ENCODE measurements at regions of chr4 and their contacts with region 1.

Region 1: GRCh38 chr4:83639849-83640493 is 104.1 kb downstream of the GPAT3 start:
- DNase-seq: peak in 3 of 5 donors; percentile 23 to 71 (median 44)
- H3K4me3 ChIP-seq: no peak overlapping the region
- H3K27ac ChIP-seq: no peak overlapping the region
- H3K4me1 ChIP-seq: peaks cover 3% of the 10 kb centered on the region
- H3K27me3 ChIP-seq: no peaks in the 10 kb centered on the region
- CTCF ChIP-seq: peak; percentile 49 to 81 (median 78)
- EP300 ChIP-seq: no peak
- POLR2A ChIP-seq: no peak

Region 2: GRCh38 chr4:83503974-83504373 is 136.0 kb before region 1 on chr4:
- intact Hi-C with region 1: loop called in 2 of 4 experiments (anchors 10 kb)
- DNase-seq: no peak
- H3K4me3 ChIP-seq: no peak overlapping the region
- H3K27ac ChIP-seq: no peak overlapping the region
- H3K4me1 ChIP-seq: no peaks in the 10 kb centered on the region
- H3K27me3 ChIP-seq: no peaks in the 10 kb centered on the region
- CTCF ChIP-seq: no peak
- EP300 ChIP-seq: no peak
- POLR2A ChIP-seq: no peak

Region 3: GRCh38 chr4:83516042-83516772 is 123.8 kb before region 1 on chr4:
- intact Hi-C with region 1: loop called in 1 of 4 experiments (anchors 10 kb)
- DNase-seq: no peak
- H3K4me3 ChIP-seq: no peak overlapping the region
- H3K27ac ChIP-seq: no peak overlapping the region
- H3K4me1 ChIP-seq: no peaks in the 10 kb centered on the region
- H3K27me3 ChIP-seq: no peaks in the 10 kb centered on the region
- CTCF ChIP-seq: no peak
- EP300 ChIP-seq: no peak
- POLR2A ChIP-seq: no peak

Region 4: DNA sequence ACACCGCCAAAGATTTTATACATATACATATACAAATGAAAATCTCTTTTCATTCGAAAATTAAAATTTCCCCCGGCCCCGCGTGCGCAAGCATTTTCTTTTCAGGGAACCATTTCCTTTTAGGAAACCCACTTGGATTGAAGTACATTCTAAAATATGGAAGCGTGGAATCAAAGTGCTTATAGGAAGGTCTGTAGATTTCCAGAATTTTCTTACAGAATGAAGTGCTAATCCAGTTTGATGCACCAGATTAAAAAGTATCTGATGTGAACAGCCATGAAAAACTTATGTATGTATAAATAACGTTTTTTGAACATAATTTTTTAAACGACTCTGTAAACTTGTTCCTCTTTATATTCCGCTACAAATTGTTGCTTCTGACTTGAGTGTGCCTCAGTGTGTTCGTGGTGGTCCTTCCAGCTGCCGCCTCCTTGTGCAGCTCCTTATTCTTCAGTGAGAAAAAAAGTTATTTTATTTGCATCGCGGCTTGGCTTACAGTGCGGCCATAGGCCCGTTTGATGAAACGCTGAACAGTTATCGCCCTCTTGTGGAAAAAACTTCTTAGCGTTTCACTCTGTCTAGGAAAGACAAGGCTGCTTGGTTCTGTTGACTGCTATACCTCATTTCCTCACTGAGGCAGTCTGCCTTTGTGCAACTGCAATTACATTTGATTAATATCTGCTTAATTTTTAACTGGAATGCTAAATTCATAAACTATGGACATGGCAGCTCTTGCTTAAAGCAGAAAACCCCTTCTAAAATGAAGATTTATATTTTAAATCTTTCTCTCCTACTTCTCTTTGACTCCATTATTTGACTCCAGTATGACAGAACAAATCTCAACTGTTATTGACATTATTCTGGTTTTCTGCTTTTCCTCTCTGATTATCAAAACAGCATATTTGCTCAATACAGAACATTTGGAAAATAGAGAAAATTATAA is 863.8 kb after region 1 on chr4:
- intact Hi-C with region 1: loop called in 1 of 4 experiments (anchors 10 kb)
- DNase-seq: no peak
- H3K4me3 ChIP-seq: no peak overlapping the region
- H3K27ac ChIP-seq: no peak overlapping the region
- H3K4me1 ChIP-seq: peaks cover 2% of the 10 kb centered on the region
- H3K27me3 ChIP-seq: peaks cover 3% of the 10 kb centered on the region
- CTCF ChIP-seq: no peak
- EP300 ChIP-seq: no peak
- POLR2A ChIP-seq: no peak

Measured in ovary (tissue), 10 donors.